ENCODE measurements at regions of chr11 and their contacts with region 1.

Region 1: DNA sequence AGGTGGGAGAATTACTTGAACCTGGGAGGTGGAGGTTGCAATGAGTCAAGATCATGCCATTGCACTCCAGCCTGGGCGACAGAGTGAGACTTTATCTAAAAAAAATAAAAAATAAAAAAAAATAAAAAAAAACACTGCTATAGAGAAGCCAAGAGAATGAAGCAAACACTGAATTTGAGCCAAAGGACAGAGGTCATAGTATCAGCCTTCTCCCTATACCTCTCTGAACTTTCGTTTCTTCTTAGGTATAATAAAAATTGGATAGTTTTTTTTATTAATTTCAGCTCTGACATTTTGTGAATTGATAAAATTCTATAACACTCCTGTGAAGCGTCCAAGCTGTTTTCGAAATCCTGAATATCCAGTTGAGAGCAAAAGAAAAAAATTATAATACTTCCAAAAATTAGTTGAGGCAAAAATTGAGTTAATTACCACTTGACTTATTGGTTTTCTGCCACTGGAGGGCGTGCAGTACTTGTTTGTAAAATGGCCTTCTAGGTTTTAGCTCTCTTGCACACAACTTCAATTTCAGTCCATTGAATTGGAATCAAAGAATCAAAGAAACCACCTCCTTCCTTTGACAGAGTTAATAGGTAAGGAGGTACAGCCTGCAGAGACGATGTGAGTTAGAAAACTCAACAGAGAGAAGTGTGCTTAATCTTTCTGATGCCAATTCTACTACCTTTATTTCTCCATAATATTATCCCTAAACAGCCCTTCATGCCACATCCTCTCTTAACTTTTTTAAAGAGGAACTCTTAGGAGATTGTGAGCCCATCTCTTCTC is 143.2 kb downstream of the BBOX1 start:
- DNase-seq: no peak
- ATAC-seq: peak; percentile 43 to 49
- H3K4me3 ChIP-seq: no peak overlapping the region
- H3K27ac ChIP-seq: no peak overlapping the region
- H3K4me1 ChIP-seq: peaks cover 3% of the 10 kb centered on the region
- H3K27me3 ChIP-seq: peaks cover 16% of the 10 kb centered on the region
- CTCF ChIP-seq: peak; percentile 70

Region 2: GRCh38 chr11:27485930-27486773 is 302.3 kb after region 1 on chr11:
- intact Hi-C with region 1: loop called (anchors 5 kb)
- DNase-seq: no peak
- ATAC-seq: peak in 1 of 2 donors; percentile 54
- H3K4me3 ChIP-seq: no peak overlapping the region
- H3K27ac ChIP-seq: no peak overlapping the region
- H3K4me1 ChIP-seq: no peaks in the 10 kb centered on the region
- H3K27me3 ChIP-seq: no peaks in the 10 kb centered on the region
- CTCF ChIP-seq: peak; percentile 82